Psoas muscle (tissue), 8 donors: ENCODE measurements at regions of chr11 and their contacts with region 1.

Region 1: DNA sequence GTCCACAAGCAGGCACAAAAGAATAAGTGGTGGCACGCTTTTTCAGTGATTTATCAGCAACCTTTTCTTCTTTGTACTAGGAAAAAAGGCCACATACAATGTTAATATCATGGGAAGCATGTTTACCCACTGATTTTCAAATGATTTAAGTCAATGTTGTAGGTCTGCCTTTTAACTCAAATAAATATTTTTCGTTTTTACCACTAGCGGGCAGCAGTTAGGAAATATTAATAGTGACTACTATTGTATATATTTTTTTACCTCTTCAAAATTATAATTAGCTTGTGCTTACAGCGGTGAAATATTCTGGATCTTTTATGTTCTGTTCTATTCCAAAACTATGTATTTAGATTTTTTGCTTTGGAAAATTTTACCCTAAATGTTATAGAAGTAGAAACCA is 6.4 kb upstream of the SLC17A6 start:
- DNase-seq: no peak
- ATAC-seq: no peak
- H3K4me3 ChIP-seq: no peak overlapping the region
- H3K27ac ChIP-seq: no peak overlapping the region
- H3K4me1 ChIP-seq: no peaks in the 10 kb centered on the region
- H3K27me3 ChIP-seq: peaks cover 0 to 6% (median 0%) of the 10 kb centered on the region in 3 donors
- CTCF ChIP-seq: no peak

Region 2: GRCh38 chr11:22539821-22540256 is 208.1 kb after region 1 on chr11:
- intact Hi-C with region 1: loop called (anchors 2 kb)
- DNase-seq: no peak
- ATAC-seq: peak; percentile 71 to 86 (median 76)
- H3K4me3 ChIP-seq: no peak overlapping the region
- H3K27ac ChIP-seq: no peak overlapping the region
- H3K4me1 ChIP-seq: no peaks in the 10 kb centered on the region
- H3K27me3 ChIP-seq: no peaks in the 10 kb centered on the region
- CTCF ChIP-seq: peak; percentile 68

Region 3: GRCh38 chr11:22787551-22788162 is 455.9 kb after region 1 on chr11:
- intact Hi-C with region 1: loop called (anchors 2 to 5 kb)
- DNase-seq: no peak
- ATAC-seq: peak in 3 of 4 donors; percentile 49 to 80 (median 69)
- H3K4me3 ChIP-seq: no peak overlapping the region
- H3K27ac ChIP-seq: no peak overlapping the region
- H3K4me1 ChIP-seq: no peaks in the 10 kb centered on the region
- H3K27me3 ChIP-seq: no peaks in the 10 kb centered on the region
- CTCF ChIP-seq: peak; percentile 72